Activated CD4-positive, alpha-beta T cell treated with anti-CD3 and anti-CD28 coated beads, Interleukin-2, amount 10 ng/mL, durations not matched to agents 24 days and 14 days (primary cell): ENCODE measurements at regions of chr18 and their contacts with region 1.

Region 1: DNA sequence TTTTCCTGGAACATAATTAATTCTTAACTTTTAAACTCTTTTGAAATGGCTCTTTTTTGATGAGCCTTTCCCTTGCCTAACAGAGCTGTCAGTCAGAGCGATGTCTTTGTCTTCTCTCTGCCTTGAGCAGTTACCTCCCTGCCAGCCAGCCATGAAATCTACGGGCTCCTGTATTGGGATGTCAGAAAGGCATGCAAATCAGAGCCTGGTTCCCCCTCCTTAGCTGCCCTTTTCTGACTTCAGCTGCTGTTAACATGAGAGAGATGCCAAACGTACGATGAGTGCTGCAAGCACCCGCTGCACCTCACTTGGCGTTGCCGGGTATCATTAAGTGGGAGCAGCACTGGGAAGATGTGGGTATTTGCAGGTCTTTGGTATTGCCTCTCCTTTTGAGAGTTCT is 131.4 kb upstream of the BOD1L2 start:
- DNase-seq: no peak
- H3K4me3 Mint-ChIP-seq: no peak overlapping the region
- H3K27ac Mint-ChIP-seq: no peak overlapping the region
- H3K4me1 Mint-ChIP-seq: peaks cover 16% of the 10 kb centered on the region
- H3K27me3 Mint-ChIP-seq: no peaks in the 10 kb centered on the region

Region 2: DNA sequence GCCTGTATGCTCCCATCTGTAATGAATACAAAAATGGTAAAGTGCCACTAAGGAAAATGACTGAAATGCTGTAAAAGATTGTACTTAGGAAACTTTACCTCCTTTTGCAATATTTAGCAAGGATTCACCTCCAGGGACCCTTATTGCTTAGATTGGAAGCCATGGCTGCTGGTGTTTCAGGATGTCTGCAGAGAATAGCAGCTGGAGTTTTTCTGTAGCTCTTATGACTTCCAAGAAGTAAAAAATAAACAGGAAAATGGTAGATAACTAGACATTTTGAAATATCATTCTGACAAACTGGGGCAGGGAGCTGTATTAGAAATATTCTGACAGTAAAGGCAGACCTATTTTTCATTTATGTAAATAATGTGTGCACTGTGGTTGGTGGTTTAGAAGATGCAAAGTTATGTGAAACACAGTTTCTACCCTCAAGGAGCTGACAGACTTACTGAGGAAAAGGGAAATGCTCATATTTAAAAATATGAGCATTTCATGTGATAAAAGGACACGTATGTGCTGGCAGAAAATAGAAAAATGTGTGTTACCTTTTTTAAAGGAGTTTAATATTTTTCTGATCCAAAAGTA is 93.5 kb before region 1 on chr18:
- intact Hi-C with region 1: loop called (anchors 5 kb)
- DNase-seq: no peak
- H3K4me3 Mint-ChIP-seq: no peak overlapping the region
- H3K27ac Mint-ChIP-seq: no peak overlapping the region
- H3K4me1 Mint-ChIP-seq: peaks cover 8% of the 10 kb centered on the region
- H3K27me3 Mint-ChIP-seq: no peaks in the 10 kb centered on the region